ENCODE measurements at regions of chr1 and their contacts with region 1.

Region 1: GRCh38 chr1:189787207-189787606 is 690.5 kb downstream of the BRINP3 start:
- DNase-seq: no peak
- H3K4me3 ChIP-seq: no peak overlapping the region
- H3K27ac ChIP-seq: no peak overlapping the region
- H3K4me1 ChIP-seq: no peaks in the 10 kb centered on the region
- H3K27me3 ChIP-seq: no peaks in the 10 kb centered on the region
- CTCF ChIP-seq: no peak

Region 2: DNA sequence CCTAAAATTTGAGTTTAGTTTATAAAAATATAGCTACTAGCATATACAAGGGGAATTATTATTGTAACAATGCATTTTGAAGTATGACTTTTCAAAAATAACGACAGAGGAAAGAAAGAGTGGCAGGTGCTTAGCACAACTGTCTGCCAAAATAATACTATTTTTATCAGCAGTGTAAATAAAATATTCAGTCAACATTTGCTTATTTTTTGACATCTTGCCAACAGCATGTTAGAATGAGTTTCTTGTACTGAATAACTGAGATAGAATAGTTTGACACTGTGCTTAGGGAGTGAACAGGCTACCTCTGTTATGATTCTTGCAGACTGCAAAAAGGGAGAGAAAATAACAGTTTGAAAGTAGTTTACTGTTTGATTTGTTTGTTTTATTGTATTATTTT is 219.3 kb before region 1 on chr1:
- CTCF ChIA-PET with region 1: no interaction called
- POLR2A ChIA-PET with region 1: interaction called, 13 read pairs
- intact Hi-C with region 1: no loop called
- DNase-seq: no peak
- H3K4me3 ChIP-seq: no peak overlapping the region
- H3K27ac ChIP-seq: no peak overlapping the region
- H3K4me1 ChIP-seq: no peaks in the 10 kb centered on the region
- H3K27me3 ChIP-seq: no peaks in the 10 kb centered on the region
- CTCF ChIP-seq: no peak